CD4-positive, alpha-beta memory T cell (primary cell): ENCODE measurements at regions of chr15 and their contacts with region 1.

Region 1: DNA sequence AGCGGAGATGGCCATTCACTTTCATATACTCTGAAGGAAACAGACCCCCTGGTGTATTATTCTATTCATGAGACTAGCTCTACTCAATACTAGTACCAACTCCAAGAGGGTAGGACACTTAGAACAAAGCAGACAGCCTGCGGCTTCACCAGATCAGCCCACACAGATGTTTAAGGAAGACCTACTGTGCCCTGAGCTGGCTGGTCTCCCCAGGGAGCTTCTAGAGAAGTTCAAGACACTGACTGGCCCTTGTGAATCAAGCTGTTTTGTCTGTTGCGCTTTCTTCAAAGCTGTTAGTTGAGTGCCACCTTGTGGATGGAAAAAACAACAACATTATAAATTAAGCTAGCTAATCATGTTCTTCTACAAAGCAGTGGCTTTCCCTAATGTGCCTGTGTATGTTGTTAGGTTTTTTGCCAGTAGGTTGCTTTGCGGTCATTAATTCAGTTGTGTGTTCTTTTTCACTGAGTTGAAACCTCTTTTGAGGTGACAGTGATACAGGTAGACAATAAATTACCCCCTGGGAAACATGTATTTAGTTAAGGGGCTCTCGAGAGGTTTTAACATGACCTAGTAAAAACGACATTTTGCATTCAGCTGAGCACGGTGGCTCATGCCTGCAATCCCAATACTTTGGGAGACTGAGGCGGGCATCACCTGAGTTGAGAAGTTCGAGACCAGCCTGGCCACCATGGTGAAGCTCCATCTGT is 64.2 kb upstream of the MYZAP start:
- DNase-seq: peak in 4 of 5 donors; percentile 28 to 44 (median 34)
- H3K4me3 ChIP-seq: no peak overlapping the region
- H3K4me3 Mint-ChIP-seq: no peak overlapping the region
- H3K27ac ChIP-seq: no peak overlapping the region
- H3K27ac Mint-ChIP-seq: no peak overlapping the region
- H3K4me1 ChIP-seq: no peaks in the 10 kb centered on the region
- H3K4me1 Mint-ChIP-seq: no peaks in the 10 kb centered on the region
- H3K27me3 ChIP-seq: no peaks in the 10 kb centered on the region
- H3K27me3 Mint-ChIP-seq: peaks cover 2 to 24% of the 10 kb centered on the region in 2 donors

Region 2: DNA sequence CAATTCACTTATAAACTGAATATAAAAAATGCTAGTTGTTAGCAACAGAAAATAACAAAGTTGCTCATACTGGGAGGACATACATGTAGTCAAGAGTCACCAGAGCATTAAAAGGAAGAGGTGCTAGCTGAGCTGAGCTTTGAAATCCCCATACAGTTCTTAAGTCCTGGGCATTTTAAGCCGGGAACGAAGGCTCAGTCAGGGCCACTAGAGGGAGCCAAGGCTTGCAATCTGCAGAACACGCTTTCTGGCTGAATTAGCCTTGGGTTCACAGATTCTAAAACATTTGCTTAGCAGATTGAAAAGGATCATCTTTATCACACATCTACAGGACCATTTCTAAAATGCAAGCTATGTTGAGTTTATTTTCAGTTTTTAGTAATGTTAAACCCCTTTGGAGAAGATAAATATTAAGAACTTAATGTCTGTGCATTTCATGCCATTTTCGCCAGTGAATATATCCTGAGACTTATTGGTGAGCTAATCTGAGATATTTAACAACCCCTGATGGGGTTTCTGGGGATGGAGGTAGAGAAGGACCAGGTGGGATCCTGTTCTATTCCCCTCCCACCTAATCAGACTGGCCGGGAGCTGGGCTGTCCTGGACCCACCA is 1036.3 kb before region 1 on chr15:
- CTCF ChIA-PET with region 1: interaction called, 36 read pairs
- POLR2A ChIA-PET with region 1: no interaction called
- intact Hi-C with region 1: loop called (anchors 1 kb)
- DNase-seq: peak in 4 of 5 donors; percentile 19 to 36 (median 27)
- H3K4me3 ChIP-seq: no peak overlapping the region
- H3K4me3 Mint-ChIP-seq: no peak overlapping the region
- H3K27ac ChIP-seq: no peak overlapping the region
- H3K27ac Mint-ChIP-seq: no peak overlapping the region
- H3K4me1 ChIP-seq: no peaks in the 10 kb centered on the region
- H3K4me1 Mint-ChIP-seq: no peaks in the 10 kb centered on the region
- H3K27me3 ChIP-seq: no peaks in the 10 kb centered on the region
- H3K27me3 Mint-ChIP-seq: peaks cover 2 to 4% of the 10 kb centered on the region in 2 donors

Region 3: GRCh38 chr15:57146506-57147201 is 380.9 kb before region 1 on chr15:
- CTCF ChIA-PET with region 1: interaction called, 15 read pairs
- POLR2A ChIA-PET with region 1: no interaction called
- intact Hi-C with region 1: no loop called
- DNase-seq: peak in 2 of 5 donors; percentile 12 to 15
- H3K4me3 ChIP-seq: no peak overlapping the region
- H3K4me3 Mint-ChIP-seq: no peak overlapping the region
- H3K27ac ChIP-seq: no peak overlapping the region
- H3K27ac Mint-ChIP-seq: peak overlapping the region in 1 of 7 donors; percentile 19
- H3K4me1 ChIP-seq: no peaks in the 10 kb centered on the region
- H3K4me1 Mint-ChIP-seq: peaks cover 0 to 9% (median 5%) of the 10 kb centered on the region in 4 donors
- H3K27me3 ChIP-seq: no peaks in the 10 kb centered on the region
- H3K27me3 Mint-ChIP-seq: no peaks in the 10 kb centered on the region

Region 4: GRCh38 chr15:57340682-57341259 is 186.8 kb before region 1 on chr15:
- CTCF ChIA-PET with region 1: interaction called, 63 read pairs
- POLR2A ChIA-PET with region 1: no interaction called
- intact Hi-C with region 1: no loop called
- DNase-seq: peak in 4 of 5 donors; percentile 7 to 12 (median 8)
- H3K4me3 ChIP-seq: no peak overlapping the region
- H3K4me3 Mint-ChIP-seq: no peak overlapping the region
- H3K27ac ChIP-seq: no peak overlapping the region
- H3K27ac Mint-ChIP-seq: no peak overlapping the region
- H3K4me1 ChIP-seq: no peaks in the 10 kb centered on the region
- H3K4me1 Mint-ChIP-seq: peaks cover 0 to 2% (median 0%) of the 10 kb centered on the region in 4 donors
- H3K27me3 ChIP-seq: no peaks in the 10 kb centered on the region
- H3K27me3 Mint-ChIP-seq: peaks cover 12 to 21% of the 10 kb centered on the region in 2 donors

Region 5: GRCh38 chr15:57541805-57542504 is 14.4 kb after region 1 on chr15:
- CTCF ChIA-PET with region 1: interaction called, 25 read pairs
- POLR2A ChIA-PET with region 1: no interaction called
- intact Hi-C with region 1: no loop called
- DNase-seq: peak in 1 of 5 donors; percentile 14
- H3K4me3 ChIP-seq: no peak overlapping the region
- H3K4me3 Mint-ChIP-seq: no peak overlapping the region
- H3K27ac ChIP-seq: no peak overlapping the region
- H3K27ac Mint-ChIP-seq: no peak overlapping the region
- H3K4me1 ChIP-seq: no peaks in the 10 kb centered on the region
- H3K4me1 Mint-ChIP-seq: no peaks in the 10 kb centered on the region
- H3K27me3 ChIP-seq: no peaks in the 10 kb centered on the region
- H3K27me3 Mint-ChIP-seq: peaks cover 3 to 15% of the 10 kb centered on the region in 2 donors

Region 6: DNA sequence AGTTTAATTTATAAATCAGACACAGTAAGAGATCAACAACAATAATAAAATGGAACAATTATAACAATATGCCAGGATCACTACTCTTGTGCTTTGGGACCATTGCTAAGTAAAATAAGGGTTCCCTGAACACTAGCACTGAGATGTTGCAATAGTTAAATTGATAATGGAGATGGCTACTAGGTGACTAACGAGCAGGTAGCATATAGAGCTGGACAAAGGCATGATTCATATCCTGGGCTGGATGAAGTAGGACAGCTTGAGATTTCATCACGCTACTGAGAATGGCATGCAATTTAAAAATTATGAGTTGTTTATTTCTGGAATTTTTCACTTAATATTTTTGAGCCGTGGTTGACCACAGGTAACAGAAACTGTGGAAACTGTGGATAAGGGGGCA is 43.5 kb after region 1 on chr15:
- CTCF ChIA-PET with region 1: no interaction called
- POLR2A ChIA-PET with region 1: no interaction called
- intact Hi-C with region 1: no loop called
- DNase-seq: no peak
- H3K4me3 ChIP-seq: no peak overlapping the region
- H3K4me3 Mint-ChIP-seq: no peak overlapping the region
- H3K27ac ChIP-seq: no peak overlapping the region
- H3K27ac Mint-ChIP-seq: no peak overlapping the region
- H3K4me1 ChIP-seq: peaks cover under 1% of the 10 kb centered on the region
- H3K4me1 Mint-ChIP-seq: peaks cover 2 to 8% (median 5%) of the 10 kb centered on the region in 4 donors
- H3K27me3 ChIP-seq: no peaks in the 10 kb centered on the region
- H3K27me3 Mint-ChIP-seq: peaks cover 2 to 8% of the 10 kb centered on the region in 2 donors